SK-N-SH (cell line): ENCODE measurements at regions of chr10 and their contacts with region 1.

Region 1: GRCh38 chr10:75034131-75034512 is 77.3 kb upstream of the SAMD8 start:
- DNase-seq: no peak
- H3K4me3 ChIP-seq: no peak overlapping the region
- H3K27ac ChIP-seq: no peak overlapping the region
- H3K4me1 ChIP-seq: peaks cover 0 to 13% of the 10 kb centered on the region in 2 experiments; a peak in 1 of 4 replicates
- H3K27me3 ChIP-seq: no peaks in the 10 kb centered on the region
- CTCF ChIP-seq: no peak
- EP300 ChIP-seq: no peak
- RAD21 ChIP-seq: no peak

Region 2: GRCh38 chr10:75019370-75019769 is 14.8 kb before region 1 on chr10:
- CTCF ChIA-PET with region 1: interaction called, 24 read pairs
- POLR2A ChIA-PET with region 1: no interaction called
- DNase-seq: no peak
- H3K4me3 ChIP-seq: no peak overlapping the region
- H3K27ac ChIP-seq: no peak overlapping the region
- H3K4me1 ChIP-seq: peaks cover 0 to 18% of the 10 kb centered on the region in 2 experiments; a peak in 2 of 4 replicates
- H3K27me3 ChIP-seq: no peaks in the 10 kb centered on the region
- CTCF ChIP-seq: peak; percentile 57
- EP300 ChIP-seq: no peak
- RAD21 ChIP-seq: peak; percentile 86

Region 3: GRCh38 chr10:75788394-75789205 is 754.5 kb after region 1 on chr10:
- CTCF ChIA-PET with region 1: no interaction called
- POLR2A ChIA-PET with region 1: no interaction called
- DNase-seq: no peak
- H3K4me3 ChIP-seq: no peak overlapping the region
- H3K27ac ChIP-seq: no peak overlapping the region
- H3K4me1 ChIP-seq: no peaks in the 10 kb centered on the region
- H3K27me3 ChIP-seq: no peaks in the 10 kb centered on the region
- CTCF ChIP-seq: no peak
- EP300 ChIP-seq: no peak
- RAD21 ChIP-seq: no peak